ENCODE measurements at regions of chr16 and their contacts with region 1.

Region 1: GRCh38 chr16:53743149-53743566 is 39.2 kb downstream of the FTO start:
- DNase-seq: peak; percentile 41
- ATAC-seq: no peak
- H3K4me3 Mint-ChIP-seq: no peak overlapping the region
- H3K27ac Mint-ChIP-seq: no peak overlapping the region
- H3K4me1 Mint-ChIP-seq: peaks cover 34% of the 10 kb centered on the region
- H3K27me3 Mint-ChIP-seq: no peaks in the 10 kb centered on the region
- CTCF ChIP-seq: peak; percentile 65

Region 2: DNA sequence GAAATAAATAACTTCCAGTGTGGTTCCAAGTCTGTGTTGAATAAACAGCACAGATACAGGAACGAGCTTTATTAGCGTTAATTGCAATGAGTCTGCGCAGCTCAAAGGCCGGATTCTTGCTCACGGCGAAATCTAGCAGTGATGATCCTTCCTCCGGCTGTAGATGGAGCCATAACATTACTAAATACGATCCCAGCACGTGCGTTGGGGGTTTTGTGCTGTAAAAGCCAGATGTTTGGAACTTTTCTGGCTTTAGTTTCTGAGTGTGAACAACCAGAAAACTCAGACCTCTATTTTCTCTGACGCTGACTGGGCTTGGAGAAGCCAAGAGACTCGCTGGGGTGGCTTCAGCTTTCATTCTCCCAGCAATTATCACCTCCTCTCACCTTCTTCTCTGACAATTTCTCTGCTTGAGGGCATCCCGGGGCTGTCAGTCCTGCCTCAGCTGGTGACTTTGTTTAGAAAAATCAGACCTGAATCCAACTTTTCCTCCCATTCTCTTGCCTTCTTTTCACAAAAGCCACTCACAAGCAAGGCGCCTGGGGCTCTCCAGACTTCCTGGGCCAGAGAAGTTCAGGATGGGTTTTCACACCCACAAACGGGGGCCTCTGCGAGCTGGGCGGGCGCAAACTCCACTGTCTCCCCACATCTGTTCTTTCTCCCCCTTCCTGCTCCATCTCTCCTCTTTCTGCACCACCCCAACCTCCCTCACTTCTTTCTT is 193.0 kb before region 1 on chr16:
- CTCF ChIA-PET with region 1: interaction called, 22 read pairs
- POLR2A ChIA-PET with region 1: no interaction called
- intact Hi-C with region 1: no loop called
- DNase-seq: peak; percentile 64
- ATAC-seq: peak; percentile 80
- H3K4me3 Mint-ChIP-seq: no peak overlapping the region
- H3K27ac Mint-ChIP-seq: no peak overlapping the region
- H3K4me1 Mint-ChIP-seq: peaks cover 14% of the 10 kb centered on the region
- H3K27me3 Mint-ChIP-seq: peaks cover 18% of the 10 kb centered on the region
- CTCF ChIP-seq: peak; percentile 83

Region 3: GRCh38 chr16:53726625-53727024 is 16.5 kb before region 1 on chr16:
- CTCF ChIA-PET with region 1: interaction called, 12 read pairs
- POLR2A ChIA-PET with region 1: no interaction called
- intact Hi-C with region 1: no loop called
- DNase-seq: no peak
- ATAC-seq: no peak
- H3K4me3 Mint-ChIP-seq: no peak overlapping the region
- H3K27ac Mint-ChIP-seq: no peak overlapping the region
- H3K4me1 Mint-ChIP-seq: peaks cover 36% of the 10 kb centered on the region
- H3K27me3 Mint-ChIP-seq: no peaks in the 10 kb centered on the region
- CTCF ChIP-seq: no peak

Region 4: DNA sequence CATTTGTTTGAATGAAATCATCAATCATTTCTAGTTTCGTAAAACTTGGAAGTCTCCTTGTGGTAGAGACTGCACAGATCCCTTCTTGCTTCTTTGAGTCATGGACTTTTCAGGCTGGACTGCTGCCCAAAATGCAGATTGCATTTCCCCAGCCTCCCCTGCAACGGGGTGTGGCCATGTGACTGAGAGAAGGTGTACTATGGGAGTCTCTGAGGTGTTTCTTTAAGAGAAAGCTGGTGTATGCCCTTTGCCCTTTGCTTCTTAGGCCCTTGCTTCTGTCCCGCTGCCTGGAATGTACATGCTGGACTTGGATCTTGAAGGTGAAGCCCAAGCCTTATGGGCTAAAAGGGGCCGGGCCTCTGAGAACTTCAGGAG is 12.4 kb after region 1 on chr16:
- CTCF ChIA-PET with region 1: interaction called, 19 read pairs
- POLR2A ChIA-PET with region 1: no interaction called
- intact Hi-C with region 1: no loop called
- DNase-seq: no peak
- ATAC-seq: no peak
- H3K4me3 Mint-ChIP-seq: no peak overlapping the region
- H3K27ac Mint-ChIP-seq: no peak overlapping the region
- H3K4me1 Mint-ChIP-seq: peaks cover 4% of the 10 kb centered on the region
- H3K27me3 Mint-ChIP-seq: no peaks in the 10 kb centered on the region
- CTCF ChIP-seq: no peak

Region 5: GRCh38 chr16:53768593-53768992 is 25.4 kb after region 1 on chr16:
- CTCF ChIA-PET with region 1: interaction called, 10 read pairs
- POLR2A ChIA-PET with region 1: no interaction called
- intact Hi-C with region 1: no loop called
- DNase-seq: peak; percentile 15
- ATAC-seq: peak; percentile 80
- H3K4me3 Mint-ChIP-seq: no peak overlapping the region
- H3K27ac Mint-ChIP-seq: no peak overlapping the region
- H3K4me1 Mint-ChIP-seq: peaks cover 24% of the 10 kb centered on the region
- H3K27me3 Mint-ChIP-seq: no peaks in the 10 kb centered on the region
- CTCF ChIP-seq: no peak

Measured in activated CD8-positive, alpha-beta T cell treated with anti-CD3 and anti-CD28 coated beads for 36 hours (primary cell).